B cell (primary cell): ENCODE measurements at regions of chr9 and their contacts with region 1.

Region 1: GRCh38 chr9:126500684-126501382 is 112.9 kb upstream of the LMX1B start:
- DNase-seq: peak; percentile 84
- ATAC-seq: peak; percentile 77
- H3K4me3 ChIP-seq: no peak overlapping the region
- H3K4me3 Mint-ChIP-seq: peak overlapping the region; percentile 70
- H3K27ac ChIP-seq: no peak overlapping the region
- H3K27ac Mint-ChIP-seq: peak overlapping the region; percentile 67
- H3K4me1 ChIP-seq: peaks cover 14 to 21% of the 10 kb centered on the region in 2 donors
- H3K4me1 Mint-ChIP-seq: peaks cover 12% of the 10 kb centered on the region
- H3K27me3 ChIP-seq: peaks cover 0 to 35% (median 11%) of the 10 kb centered on the region in 4 experiments
- H3K27me3 Mint-ChIP-seq: peaks cover 11% of the 10 kb centered on the region
- CTCF ChIP-seq: peak; percentile 98

Region 2: DNA sequence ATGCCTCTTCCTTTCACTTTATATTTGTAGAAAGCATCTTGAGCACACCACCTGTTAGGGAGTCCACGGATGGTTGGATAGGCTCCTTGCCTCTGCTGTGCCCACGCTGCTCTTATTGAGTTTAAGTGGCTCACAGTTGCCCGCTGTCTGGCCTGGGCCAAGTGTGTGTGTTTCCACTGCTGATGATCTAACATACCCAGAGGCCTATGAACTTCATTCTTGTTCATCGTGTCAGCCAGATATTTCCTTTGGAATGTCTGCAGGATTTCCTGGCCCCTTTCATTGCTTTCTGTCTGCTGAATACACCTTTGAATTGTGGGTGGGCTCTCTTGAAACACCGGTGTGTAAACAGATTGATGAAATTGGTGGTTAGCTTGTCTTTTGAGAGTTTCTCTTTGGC is 127.6 kb before region 1 on chr9:
- CTCF ChIA-PET with region 1: no interaction called
- POLR2A ChIA-PET with region 1: no interaction called
- intact Hi-C with region 1: no loop called
- DNase-seq: no peak
- ATAC-seq: no peak
- H3K4me3 ChIP-seq: no peak overlapping the region
- H3K4me3 Mint-ChIP-seq: no peak overlapping the region
- H3K27ac ChIP-seq: no peak overlapping the region
- H3K27ac Mint-ChIP-seq: no peak overlapping the region
- H3K4me1 ChIP-seq: peaks cover 0 to 4% of the 10 kb centered on the region in 2 donors
- H3K4me1 Mint-ChIP-seq: peaks cover 6% of the 10 kb centered on the region
- H3K27me3 ChIP-seq: no peaks in the 10 kb centered on the region
- H3K27me3 Mint-ChIP-seq: peaks cover 26% of the 10 kb centered on the region
- CTCF ChIP-seq: no peak

Region 3: GRCh38 chr9:126471084-126471624 is 29.7 kb before region 1 on chr9:
- CTCF ChIA-PET with region 1: interaction called, 12 read pairs
- POLR2A ChIA-PET with region 1: no interaction called
- intact Hi-C with region 1: no loop called
- DNase-seq: peak; percentile 84
- ATAC-seq: peak; percentile 83
- H3K4me3 ChIP-seq: peak overlapping the region in 4 of 5 experiments; percentile 11 to 60 (median 30)
- H3K4me3 Mint-ChIP-seq: peak overlapping the region; percentile 76
- H3K27ac ChIP-seq: peak overlapping the region; percentile 62 to 83
- H3K27ac Mint-ChIP-seq: peak overlapping the region; percentile 90
- H3K4me1 ChIP-seq: peaks cover 46 to 49% of the 10 kb centered on the region in 2 donors
- H3K4me1 Mint-ChIP-seq: peaks cover 56% of the 10 kb centered on the region
- H3K27me3 ChIP-seq: no peaks in the 10 kb centered on the region
- H3K27me3 Mint-ChIP-seq: no peaks in the 10 kb centered on the region
- CTCF ChIP-seq: no peak

Region 4: GRCh38 chr9:126514047-126514821 is 13.4 kb after region 1 on chr9:
- CTCF ChIA-PET with region 1: interaction called, 33 read pairs
- POLR2A ChIA-PET with region 1: no interaction called
- intact Hi-C with region 1: loop called (anchors 2 kb)
- DNase-seq: peak; percentile 78
- ATAC-seq: peak; percentile 97
- H3K4me3 ChIP-seq: peak overlapping the region in 3 of 5 experiments; percentile 17 to 38 (median 29)
- H3K4me3 Mint-ChIP-seq: peak overlapping the region; percentile 50
- H3K27ac ChIP-seq: no peak overlapping the region
- H3K27ac Mint-ChIP-seq: peak overlapping the region; percentile 32
- H3K4me1 ChIP-seq: peaks cover 24 to 27% of the 10 kb centered on the region in 2 donors
- H3K4me1 Mint-ChIP-seq: peaks cover 26% of the 10 kb centered on the region
- H3K27me3 ChIP-seq: peaks cover 2 to 53% (median 25%) of the 10 kb centered on the region in 4 experiments
- H3K27me3 Mint-ChIP-seq: peaks cover 44% of the 10 kb centered on the region
- CTCF ChIP-seq: peak; percentile 76

Region 5: DNA sequence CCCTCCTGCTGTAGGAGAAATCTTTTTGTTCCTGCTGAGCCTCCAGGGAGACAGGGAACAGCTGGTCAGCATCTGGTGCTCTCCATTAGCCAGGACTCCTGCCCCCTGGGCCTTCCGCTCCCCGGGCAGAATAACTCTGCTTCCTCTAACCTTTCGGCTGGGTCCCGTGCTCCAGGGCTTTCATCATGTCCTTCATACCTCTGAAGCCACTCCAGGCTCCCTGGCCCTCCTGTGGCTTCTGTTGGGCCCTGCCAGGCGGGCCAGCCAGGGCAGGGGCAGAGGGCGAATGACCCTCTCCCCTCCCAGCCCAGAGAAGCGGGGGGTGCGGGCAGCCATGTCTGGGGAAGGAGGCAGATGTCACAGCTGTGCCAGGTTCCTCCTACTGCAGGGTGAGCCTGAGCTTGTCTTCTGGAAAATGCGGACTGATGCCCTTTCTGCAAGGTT is 31.2 kb after region 1 on chr9:
- CTCF ChIA-PET with region 1: interaction called, 27 read pairs
- POLR2A ChIA-PET with region 1: no interaction called
- intact Hi-C with region 1: no loop called
- DNase-seq: no peak
- ATAC-seq: no peak
- H3K4me3 ChIP-seq: no peak overlapping the region
- H3K4me3 Mint-ChIP-seq: peak overlapping the region; percentile 79
- H3K27ac ChIP-seq: peak overlapping the region in 1 of 2 donors; percentile 18
- H3K27ac Mint-ChIP-seq: peak overlapping the region; percentile 91
- H3K4me1 ChIP-seq: peaks cover 43 to 58% of the 10 kb centered on the region in 2 donors
- H3K4me1 Mint-ChIP-seq: peaks cover 48% of the 10 kb centered on the region
- H3K27me3 ChIP-seq: no peaks in the 10 kb centered on the region
- H3K27me3 Mint-ChIP-seq: no peaks in the 10 kb centered on the region
- CTCF ChIP-seq: no peak

Region 6: DNA sequence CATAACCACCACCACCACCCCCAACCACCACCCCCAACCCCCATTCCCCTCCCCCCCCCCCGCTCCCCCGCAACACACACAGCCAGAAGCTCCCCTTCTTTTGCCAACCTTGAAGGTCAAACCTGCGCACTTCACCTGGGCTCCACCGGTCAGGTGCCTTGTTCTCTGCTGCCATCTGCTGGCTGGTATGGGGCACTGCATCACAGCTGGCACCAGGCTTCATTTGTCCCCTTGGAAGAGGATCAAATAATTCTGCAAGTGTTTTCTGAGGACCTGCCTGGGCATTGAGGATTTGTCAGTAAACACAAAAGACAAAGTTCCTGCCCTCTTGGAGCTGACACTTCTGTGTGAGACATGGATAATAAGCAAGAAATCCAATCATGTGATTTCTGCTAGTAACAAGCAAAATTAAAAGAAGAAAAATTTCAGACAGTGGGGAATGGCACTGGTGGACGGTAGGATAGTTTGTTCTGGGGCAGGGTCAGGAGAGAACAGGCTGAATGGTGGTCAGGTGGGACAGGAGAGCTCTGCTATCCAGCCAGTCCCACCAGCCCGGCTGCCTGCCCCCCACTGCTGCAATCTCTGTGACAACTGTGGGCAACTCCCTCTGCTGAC is 57.3 kb after region 1 on chr9:
- CTCF ChIA-PET with region 1: interaction called, 420 read pairs
- POLR2A ChIA-PET with region 1: no interaction called
- intact Hi-C with region 1: loop called (anchors 1 kb)
- DNase-seq: peak; percentile 78
- ATAC-seq: peak; percentile 97
- H3K4me3 ChIP-seq: no peak overlapping the region
- H3K4me3 Mint-ChIP-seq: no peak overlapping the region
- H3K27ac ChIP-seq: no peak overlapping the region
- H3K27ac Mint-ChIP-seq: no peak overlapping the region
- H3K4me1 ChIP-seq: no peaks in the 10 kb centered on the region
- H3K4me1 Mint-ChIP-seq: no peaks in the 10 kb centered on the region
- H3K27me3 ChIP-seq: peaks cover 0 to 23% (median 10%) of the 10 kb centered on the region in 4 experiments
- H3K27me3 Mint-ChIP-seq: peaks cover 26% of the 10 kb centered on the region
- CTCF ChIP-seq: peak; percentile 87

Region 7: DNA sequence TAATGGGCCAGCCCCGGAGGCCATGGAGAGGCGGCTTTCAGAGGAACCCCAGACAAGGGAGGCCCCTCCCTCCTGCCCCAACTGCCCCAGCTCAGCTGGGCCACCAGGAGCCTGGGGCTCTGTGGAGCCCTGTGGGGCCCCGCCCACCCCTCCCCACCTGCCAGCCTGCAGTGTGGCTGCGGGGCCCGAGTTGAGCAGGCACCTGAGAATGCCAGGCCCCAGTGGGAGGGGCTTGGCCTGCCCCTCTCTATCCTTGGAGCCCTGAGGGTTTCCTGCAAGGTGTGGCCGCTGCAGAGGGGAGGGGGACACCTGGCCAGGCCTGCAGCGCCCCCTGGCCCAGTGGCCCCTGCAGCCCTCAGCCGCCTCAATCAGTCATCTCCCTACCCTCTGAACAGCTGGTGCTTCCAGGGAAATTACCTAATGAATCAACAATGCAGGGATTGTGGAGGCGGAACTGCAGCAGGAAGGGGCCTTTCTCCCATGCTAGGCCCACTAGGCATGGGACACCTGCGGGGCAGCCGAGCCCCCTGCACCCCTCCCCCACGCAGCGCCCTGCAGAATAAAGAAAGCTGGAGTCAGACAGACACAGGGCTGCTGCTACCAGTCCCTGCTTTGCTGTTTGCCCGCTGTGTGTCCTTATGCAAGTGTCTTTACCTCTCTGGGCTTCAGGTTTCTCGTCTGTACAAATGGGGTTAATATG is 160.8 kb after region 1 on chr9:
- CTCF ChIA-PET with region 1: no interaction called
- POLR2A ChIA-PET with region 1: no interaction called
- intact Hi-C with region 1: no loop called
- DNase-seq: no peak
- ATAC-seq: no peak
- H3K4me3 ChIP-seq: no peak overlapping the region
- H3K4me3 Mint-ChIP-seq: no peak overlapping the region
- H3K27ac ChIP-seq: no peak overlapping the region
- H3K27ac Mint-ChIP-seq: no peak overlapping the region
- H3K4me1 ChIP-seq: peaks cover 10 to 13% of the 10 kb centered on the region in 2 donors
- H3K4me1 Mint-ChIP-seq: peaks cover 14% of the 10 kb centered on the region
- H3K27me3 ChIP-seq: peaks cover 0 to 52% (median 6%) of the 10 kb centered on the region in 4 experiments
- H3K27me3 Mint-ChIP-seq: peaks cover 35% of the 10 kb centered on the region
- CTCF ChIP-seq: no peak